ENCODE measurements at regions of chr17 and their contacts with region 1.

Region 1: GRCh38 chr17:44186307-44187130 is at the start of gene TMUB2:
- DNase-seq: peak; percentile 99
- H3K4me3 Mint-ChIP-seq: peak within 1 kb of the TSS; percentile 100
- H3K27ac Mint-ChIP-seq: peak within 1 kb of the TSS; percentile 99
- H3K4me1 Mint-ChIP-seq: peaks cover 31% of the 10 kb centered on the region
- H3K27me3 Mint-ChIP-seq: no peaks in the 10 kb centered on the region
- total RNA-seq, gene TMUB2: 17.3 and 18.7 TPM in 2 replicates

Region 2: GRCh38 chr17:44070455-44071197 is 115.9 kb before region 1 on chr17 and contains the start of gene G6PC3:
- intact Hi-C with region 1: loop called (anchors 1 kb)
- DNase-seq: peak; percentile 78
- H3K4me3 Mint-ChIP-seq: peak within 1 kb of the TSS; percentile 98
- H3K27ac Mint-ChIP-seq: peak within 1 kb of the TSS; percentile 99
- H3K4me1 Mint-ChIP-seq: peaks cover 16% of the 10 kb centered on the region
- H3K27me3 Mint-ChIP-seq: no peaks in the 10 kb centered on the region
- total RNA-seq, gene G6PC3: 33.5 and 34.9 TPM in 2 replicates

Region 3: GRCh38 chr17:44130693-44131349 is 55.7 kb before region 1 on chr17:
- intact Hi-C with region 1: no loop called
- DNase-seq: no peak
- H3K4me3 Mint-ChIP-seq: no peak overlapping the region
- H3K27ac Mint-ChIP-seq: no peak overlapping the region
- H3K4me1 Mint-ChIP-seq: peaks cover 7% of the 10 kb centered on the region
- H3K27me3 Mint-ChIP-seq: no peaks in the 10 kb centered on the region

Region 4: DNA sequence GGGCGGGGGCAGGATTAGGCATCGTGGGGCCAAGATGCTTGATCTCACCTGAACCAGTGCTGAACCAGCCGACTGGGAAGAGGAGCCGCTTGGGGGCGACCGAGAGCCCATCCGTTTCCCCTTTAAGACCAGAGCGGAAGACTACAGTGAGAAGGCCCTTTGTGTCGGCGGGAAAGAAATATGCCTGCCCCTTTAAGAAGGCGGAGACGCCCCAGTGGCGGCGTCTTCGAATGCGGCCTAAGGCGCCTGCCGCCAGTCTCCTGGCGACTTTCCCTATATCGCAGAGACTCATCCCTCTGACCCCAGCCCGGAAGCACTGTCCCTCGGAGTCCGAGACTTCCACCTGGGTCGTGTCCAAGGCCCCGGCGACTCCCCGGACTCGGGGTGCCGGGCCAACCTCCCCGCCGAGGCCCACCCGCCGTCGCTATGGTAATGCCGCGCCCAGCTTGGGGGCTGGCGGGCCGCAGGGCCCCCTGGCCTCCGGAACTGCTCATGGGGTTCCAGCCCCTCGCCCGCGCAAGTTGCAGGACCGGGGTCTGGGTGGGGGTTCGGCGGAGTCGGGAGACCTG is 44.7 kb before region 1 on chr17 and contains the start of gene HROB:
- intact Hi-C with region 1: loop called (anchors 1 kb)
- DNase-seq: peak; percentile 97
- H3K4me3 Mint-ChIP-seq: peak within 1 kb of the TSS; percentile 95
- H3K27ac Mint-ChIP-seq: peak within 1 kb of the TSS; percentile 95
- H3K4me1 Mint-ChIP-seq: peaks cover 16% of the 10 kb centered on the region
- H3K27me3 Mint-ChIP-seq: no peaks in the 10 kb centered on the region
- total RNA-seq, gene HROB: 23.0 and 23.1 TPM in 2 replicates

Region 5: DNA sequence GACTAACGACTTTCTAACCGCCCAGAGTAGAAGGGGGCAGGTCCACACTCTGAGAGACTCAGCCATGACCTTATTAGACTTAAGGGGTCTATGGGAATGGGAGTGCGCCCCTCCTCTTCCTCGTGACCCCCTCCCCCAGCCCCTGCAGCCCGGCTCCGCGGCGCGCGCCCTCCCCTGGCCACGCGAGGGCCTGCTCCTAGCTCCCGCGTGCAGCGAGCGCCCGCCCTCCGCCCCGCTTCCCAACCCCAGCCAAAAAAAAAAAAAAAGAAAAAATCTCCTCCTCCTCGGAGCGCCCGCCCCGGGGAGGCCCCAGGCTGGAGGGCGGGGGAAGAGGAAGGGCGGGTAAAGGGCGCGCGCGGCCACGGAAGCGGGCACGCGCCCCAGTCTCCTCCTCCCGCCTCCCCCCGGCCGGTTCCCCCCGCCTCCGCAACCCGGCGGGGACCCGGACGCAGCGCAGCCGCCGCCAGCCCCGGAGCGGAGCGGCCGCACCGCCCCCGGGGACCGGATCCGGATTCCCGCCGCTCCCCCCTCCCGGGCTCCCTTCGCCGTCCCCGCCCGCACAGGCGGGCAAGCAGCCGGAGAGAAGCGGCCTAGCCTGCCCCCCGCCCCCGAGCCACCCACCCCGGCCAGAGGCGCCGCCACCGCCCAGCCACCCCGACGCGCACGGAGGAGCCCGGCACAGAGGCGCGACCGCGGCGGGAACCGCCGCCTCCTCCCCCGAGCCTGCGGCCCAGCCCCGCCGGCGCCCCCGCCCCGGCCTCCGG is 32.0 kb after region 1 on chr17:
- intact Hi-C with region 1: loop called (anchors 1 kb)
- DNase-seq: peak; percentile 86
- H3K4me3 Mint-ChIP-seq: peak overlapping the region; percentile 98
- H3K27ac Mint-ChIP-seq: peak overlapping the region; percentile 96
- H3K4me1 Mint-ChIP-seq: peaks cover 45% of the 10 kb centered on the region
- H3K27me3 Mint-ChIP-seq: no peaks in the 10 kb centered on the region

Region 6: GRCh38 chr17:44331249-44331760 is 144.8 kb after region 1 on chr17:
- intact Hi-C with region 1: loop called (anchors 1 kb)
- DNase-seq: peak; percentile 65
- H3K4me3 Mint-ChIP-seq: no peak overlapping the region
- H3K27ac Mint-ChIP-seq: no peak overlapping the region
- H3K4me1 Mint-ChIP-seq: peaks cover 12% of the 10 kb centered on the region
- H3K27me3 Mint-ChIP-seq: no peaks in the 10 kb centered on the region